ENCODE measurements at regions of chr17 and their contacts with region 1.

Region 1: DNA sequence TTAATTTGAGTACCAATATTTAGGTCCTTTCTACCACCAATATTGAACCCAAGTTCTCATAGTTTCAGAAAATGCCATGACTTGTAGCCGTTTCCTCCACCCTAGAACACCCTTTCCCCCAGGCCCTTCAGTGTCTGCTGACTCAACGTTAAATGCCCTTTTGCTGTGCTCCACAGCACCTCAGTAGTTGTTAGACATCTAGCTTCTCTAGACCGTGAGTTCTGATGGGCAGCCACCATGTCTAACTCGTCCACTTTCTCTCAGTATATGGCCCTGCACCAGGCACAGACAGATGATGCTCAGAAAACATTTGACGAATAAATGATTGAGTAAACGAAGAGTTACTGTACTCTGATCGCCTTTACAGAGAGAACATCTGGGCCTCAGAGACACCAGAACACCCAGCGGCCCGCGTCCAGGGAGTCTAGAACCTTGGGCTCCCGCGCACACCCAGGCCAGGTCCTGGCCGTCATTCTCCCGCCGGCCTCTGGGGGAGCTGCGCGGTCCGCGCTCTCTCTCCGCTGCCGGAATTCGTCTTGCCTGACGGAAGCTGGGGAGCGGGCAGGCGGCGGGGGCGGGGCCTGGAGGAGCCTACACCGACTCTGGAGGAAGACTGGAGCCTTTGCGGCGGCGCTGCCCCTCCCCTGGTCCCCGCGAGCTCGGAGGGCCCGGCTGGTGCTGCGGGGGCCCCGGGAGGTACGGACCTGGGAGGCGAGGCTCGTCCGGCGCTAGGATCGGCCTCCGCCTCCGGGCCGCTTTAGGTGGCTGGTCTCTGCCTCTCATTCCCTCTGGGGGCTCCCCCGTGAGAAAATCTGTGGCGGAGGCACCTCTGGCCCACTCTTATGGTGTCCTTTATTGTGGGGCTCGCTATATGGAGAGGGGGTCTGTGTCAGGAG is at the start of gene NKIRAS2:
- DNase-seq: peak; percentile 94
- CTCF ChIP-seq: peak; percentile 96

Region 2: GRCh38 chr17:41284043-41284442 is 735.7 kb before region 1 on chr17:
- CTCF ChIA-PET with region 1: no interaction called
- POLR2A ChIA-PET with region 1: no interaction called
- DNase-seq: no peak
- CTCF ChIP-seq: no peak

Region 3: DNA sequence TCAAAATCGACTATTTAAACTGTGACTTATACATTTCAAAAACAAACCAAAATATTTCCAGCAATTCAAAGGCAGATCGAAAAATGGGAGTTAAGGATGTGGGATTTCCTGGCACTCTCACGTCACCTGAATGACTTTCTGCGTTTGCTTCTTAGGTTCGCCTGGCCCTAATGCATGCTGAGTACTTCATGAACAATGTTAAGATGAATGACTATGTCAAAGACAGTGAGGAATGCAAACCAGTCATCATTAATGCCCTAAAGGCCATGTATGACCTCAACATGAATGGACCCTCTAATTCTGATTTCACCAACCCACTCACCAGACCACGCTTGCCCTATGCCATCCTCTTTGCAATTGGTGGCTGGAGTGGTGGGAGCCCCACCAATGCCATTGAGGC is 174.8 kb before region 1 on chr17:
- CTCF ChIA-PET with region 1: no interaction called
- POLR2A ChIA-PET with region 1: no interaction called
- DNase-seq: no peak
- CTCF ChIP-seq: no peak

Region 4: DNA sequence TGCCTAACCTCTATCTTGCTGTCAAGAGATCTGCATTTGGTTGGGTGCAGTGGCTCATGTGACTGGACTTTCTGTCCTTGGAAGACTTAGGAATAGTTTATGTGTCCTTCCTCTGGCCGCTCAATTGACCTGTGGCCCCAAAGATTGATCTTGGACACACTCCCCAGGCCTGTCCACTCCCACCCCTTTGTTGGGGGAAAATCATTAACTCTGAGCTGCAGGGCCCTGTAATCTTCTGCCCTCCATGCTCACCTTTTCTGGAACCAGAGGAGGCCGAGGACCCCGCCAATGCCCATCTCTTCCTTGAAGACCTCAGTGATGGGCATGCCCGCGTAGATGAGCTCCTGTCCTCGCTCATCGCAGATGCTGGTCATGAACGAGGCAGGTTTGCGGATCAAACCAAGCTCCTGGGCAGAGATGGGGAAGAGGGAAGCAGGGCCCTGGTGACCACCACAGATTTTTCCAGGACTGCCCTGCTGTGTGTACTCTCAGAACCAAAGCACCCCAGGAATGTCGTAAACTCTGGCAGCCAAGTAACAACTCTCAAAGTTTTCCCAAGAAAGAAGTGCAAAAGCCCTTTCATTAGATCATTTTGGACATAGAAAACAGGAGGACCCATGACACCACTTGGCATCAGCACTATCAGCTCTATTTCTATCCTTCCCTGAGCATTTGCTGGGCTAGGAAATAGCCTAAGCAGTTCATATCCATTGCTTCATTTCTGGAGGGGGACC is 146.0 kb before region 1 on chr17:
- CTCF ChIA-PET with region 1: no interaction called
- POLR2A ChIA-PET with region 1: no interaction called
- DNase-seq: no peak
- CTCF ChIP-seq: no peak

Region 5: DNA sequence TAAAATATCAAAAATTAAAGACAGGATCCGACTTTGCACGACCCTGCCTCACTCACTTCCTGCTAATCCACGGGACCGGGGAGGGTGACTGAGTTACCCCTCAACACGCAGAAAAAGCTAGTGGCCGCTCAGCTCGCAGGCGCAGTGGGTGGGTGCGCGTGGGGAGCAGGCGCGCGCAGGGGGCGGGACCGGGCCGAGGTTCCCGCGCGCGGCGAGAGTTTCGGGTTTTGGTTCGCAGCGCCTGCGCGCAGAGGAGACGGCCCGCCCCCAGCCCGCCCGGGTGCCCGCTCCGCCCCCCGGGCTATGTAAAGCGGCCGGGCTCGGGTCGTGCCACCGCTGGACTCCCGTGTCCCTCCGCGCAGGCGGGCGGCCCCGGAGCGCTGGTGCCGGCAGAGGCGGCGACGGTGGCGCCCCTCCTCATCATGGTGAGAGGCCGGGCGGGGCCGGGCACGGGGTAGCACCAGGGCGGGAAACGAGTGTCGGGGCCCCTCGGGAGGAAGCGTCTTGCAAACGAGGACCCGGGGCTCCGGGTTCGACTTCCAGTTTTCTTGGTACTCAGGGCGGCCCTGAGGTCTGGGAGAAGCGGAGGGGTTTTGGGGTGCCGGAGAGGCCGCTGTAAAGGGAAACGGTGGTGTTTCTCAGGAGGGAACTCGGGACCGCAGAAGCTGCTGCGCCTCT is 53.2 kb before region 1 on chr17 and contains the start of gene CNP:
- CTCF ChIA-PET with region 1: interaction called, 43 read pairs
- POLR2A ChIA-PET with region 1: interaction called, 6 read pairs
- DNase-seq: peak; percentile 97
- CTCF ChIP-seq: no peak

Region 6: DNA sequence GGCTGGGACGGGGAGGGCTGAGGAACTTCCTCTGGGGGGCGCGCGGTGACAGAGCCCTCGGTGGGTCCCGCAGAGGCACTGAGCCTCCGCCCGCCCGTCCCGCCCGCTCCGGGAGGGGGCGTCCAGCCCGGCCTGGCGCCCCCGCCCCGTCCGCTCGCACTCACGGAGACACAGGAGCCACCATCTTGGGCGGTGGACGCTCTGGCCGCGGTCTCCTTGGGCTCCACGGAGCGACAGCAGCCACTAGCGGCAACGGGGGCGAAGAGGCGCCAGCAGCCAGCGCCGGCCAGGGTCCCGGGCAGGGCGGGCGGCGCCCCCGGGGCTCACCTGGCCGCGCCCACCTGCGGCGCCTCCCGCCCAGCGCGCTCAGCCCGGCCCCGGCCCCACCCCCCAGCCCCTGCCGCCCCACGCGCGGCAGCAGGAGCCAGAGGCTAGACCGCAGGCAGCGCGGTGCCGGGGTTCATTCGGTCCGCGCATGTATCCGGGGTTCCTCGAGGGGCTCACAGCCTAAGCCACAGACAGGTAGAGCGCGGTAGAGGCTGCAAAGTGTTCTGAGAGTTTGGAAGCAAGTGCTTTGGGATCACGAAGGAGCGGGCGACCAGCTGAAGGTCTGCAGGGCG is 30.7 kb after region 1 on chr17 and contains the start of gene C17orf113:
- CTCF ChIA-PET with region 1: interaction called, 12 read pairs
- POLR2A ChIA-PET with region 1: no interaction called
- DNase-seq: peak; percentile 85
- CTCF ChIP-seq: peak; percentile 58

Region 7: DNA sequence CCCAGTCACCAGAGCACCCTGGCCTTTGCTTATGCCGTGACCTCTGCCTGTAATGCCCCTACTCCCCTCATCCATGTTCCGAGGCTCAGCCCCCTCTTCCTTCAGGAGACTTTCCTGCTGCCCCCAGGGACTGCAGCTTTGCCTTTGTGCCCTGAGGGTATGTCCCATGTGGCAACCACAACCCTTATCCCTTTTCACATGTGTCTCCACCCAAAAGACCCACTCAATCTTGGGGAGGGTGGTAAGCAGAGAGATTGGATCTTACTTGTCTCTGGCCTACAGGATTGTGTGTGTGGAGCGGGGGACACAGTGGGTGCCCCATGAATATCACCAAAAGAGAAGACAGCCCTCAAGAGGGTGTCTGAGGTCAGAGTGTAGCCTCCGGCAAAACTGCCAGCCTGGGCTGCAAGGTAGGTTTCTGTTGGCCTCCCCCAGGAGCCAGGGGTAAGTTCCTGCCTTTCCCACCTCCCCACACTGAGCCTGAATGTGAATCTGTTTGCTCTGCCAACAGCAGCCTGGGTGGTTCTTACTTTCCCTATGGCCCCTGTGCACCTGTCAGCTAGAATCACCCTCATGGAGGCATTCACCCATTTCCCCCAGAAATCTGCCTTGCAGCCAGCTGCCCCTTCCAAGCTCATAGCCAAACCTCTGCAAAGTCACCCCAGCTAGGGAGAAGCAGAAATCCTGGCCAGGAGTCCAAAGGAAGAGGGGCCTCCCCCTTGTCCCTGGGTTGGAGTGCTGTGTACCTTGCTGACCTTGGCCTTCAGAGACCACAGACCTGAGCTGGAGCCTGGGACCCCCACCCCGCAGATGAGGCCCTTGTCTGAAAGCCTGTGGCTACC is 42.1 kb after region 1 on chr17:
- CTCF ChIA-PET with region 1: interaction called, 44 read pairs
- POLR2A ChIA-PET with region 1: no interaction called
- DNase-seq: no peak
- CTCF ChIP-seq: no peak

Region 8: DNA sequence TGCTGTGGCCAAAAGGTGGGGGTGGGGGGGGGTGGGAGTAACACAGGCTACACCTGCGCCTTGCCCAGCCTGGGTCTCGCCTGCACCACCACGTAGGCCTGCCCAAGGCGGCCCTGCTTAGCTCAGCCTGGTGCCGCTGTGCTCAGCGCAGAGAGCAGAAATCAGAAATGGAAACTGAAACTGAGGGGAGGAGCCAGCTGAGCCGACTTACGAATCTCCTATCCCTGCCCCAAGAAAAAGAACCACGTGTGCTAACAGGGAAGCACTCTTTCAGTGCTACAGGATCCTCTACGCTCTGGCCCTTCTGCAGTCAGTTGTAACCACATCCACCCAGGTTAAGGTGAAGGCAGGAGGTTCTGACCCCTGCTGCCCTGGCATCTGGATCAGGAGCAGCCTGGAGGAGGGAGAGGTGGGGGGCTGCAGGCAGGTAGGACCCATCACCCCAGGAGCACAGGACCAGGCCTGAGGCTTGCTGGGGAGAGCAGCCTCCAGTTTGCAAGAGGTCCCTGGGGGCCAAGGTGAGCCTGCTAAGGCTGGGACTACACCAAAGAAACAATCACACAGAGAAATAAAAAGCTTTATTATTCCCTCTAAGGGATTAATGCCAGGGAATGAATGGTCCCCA is 92.9 kb after region 1 on chr17 and contains the start of gene DHX58:
- CTCF ChIA-PET with region 1: interaction called, 58 read pairs
- POLR2A ChIA-PET with region 1: no interaction called
- DNase-seq: peak; percentile 93
- CTCF ChIP-seq: no peak

Region 9: DNA sequence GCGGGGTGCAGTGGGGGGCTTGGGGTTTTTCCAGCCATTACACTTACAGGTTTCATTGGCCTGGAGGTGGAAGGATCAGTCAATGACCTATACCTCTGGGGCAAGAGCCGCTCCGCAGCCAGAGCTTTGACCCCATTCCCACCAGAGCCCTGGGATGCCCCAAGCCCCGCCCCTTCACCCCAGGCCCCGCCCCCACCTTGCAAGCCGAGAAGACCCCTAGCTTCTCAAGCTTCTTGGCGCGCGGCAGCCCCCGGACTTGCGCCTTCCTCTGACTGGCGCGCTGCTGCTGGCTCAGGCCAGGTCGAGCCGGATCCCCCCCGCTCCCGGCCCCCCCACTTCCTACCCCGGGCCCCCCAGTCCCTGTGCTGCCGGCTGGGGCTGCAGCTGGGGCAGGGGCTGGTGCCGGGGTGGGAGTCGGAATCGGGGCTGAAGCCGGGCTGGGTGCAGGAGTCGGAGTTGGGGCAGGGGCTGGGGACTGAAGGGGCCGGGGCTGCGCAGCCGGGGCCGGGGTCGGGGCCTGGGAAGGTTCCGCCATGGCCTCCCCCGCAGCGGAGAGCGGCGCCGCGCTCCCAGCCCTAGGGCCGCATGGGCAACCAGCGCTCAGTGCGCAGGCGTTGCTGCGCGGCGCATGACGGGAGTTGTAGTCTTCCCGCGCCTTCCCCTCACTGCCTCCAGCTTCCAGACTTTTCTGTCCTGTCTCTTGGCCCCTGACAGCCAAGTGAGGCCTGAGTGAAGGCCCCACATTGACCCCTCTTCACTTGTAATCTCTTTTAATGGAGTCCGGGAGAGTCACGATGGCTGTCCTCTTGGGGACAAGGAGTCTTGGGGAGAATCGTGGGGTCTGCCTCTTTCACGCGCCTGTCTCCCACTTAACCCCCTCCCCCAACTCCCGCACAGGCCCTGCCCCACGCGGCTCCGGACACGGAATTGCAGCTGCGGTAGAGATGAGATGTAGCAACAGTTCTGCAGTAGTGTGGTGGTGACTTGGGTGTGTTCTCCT is 101.3 kb after region 1 on chr17 and contains the start of gene KAT2A:
- CTCF ChIA-PET with region 1: interaction called, 58 read pairs
- POLR2A ChIA-PET with region 1: interaction called, 5 read pairs
- DNase-seq: peak; percentile 94
- CTCF ChIP-seq: no peak

Region 10: DNA sequence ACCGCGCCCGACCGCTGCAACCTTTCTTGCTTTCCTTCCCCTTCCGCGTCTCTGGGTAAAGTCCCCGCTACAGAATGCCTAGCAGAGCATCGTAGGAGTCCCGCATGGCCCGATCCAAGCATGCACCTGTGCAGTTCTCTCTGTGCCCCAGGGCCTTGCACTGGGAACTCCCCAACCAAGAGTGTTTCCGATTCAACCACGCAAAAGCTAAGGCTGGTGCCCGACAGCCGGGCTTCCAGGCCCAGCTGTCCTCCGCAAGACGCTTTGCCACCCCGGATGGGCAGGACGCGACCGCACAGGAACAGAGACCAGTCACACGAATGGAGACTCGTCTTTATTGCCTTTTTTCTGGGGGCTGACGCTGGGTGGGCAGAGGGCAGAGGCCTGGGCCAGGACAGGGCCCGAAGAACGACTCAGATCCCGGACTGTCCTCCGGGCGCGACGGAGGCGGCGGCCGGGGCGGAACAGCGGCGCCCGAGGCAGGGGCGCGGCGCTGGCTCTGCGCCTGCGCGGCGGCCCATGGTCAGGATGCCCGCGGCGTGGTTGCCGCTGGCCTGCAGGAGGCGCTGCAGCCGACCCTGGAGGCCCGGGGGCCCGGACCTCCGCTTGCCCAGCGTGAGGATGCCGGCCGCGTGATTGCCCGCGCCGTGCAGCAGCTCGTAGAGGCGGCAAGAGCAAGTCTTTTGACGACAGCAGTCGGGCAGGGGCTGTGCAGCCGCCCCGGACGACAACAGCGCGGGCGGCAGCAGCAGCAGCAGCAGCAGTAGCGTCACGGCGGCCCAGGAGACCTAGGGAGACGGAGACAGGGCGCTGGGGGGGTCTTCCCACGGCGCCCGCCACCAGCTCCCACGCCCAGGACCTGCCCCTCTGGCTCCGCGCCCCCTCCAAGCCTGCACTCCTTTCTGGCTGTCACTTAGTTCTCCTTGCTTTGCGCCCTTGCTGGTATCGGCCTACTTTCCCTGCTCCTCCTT is 164.3 kb after region 1 on chr17:
- CTCF ChIA-PET with region 1: interaction called, 12 read pairs
- POLR2A ChIA-PET with region 1: no interaction called
- DNase-seq: peak; percentile 95
- CTCF ChIP-seq: peak; percentile 90